SK-N-SH (cell line): ENCODE measurements at regions of chr2 and their contacts with region 1.

Region 1: GRCh38 chr2:143034292-143035074 is 94.7 kb upstream of the ARHGAP15 start:
- DNase-seq: peak; percentile 57
- H3K4me3 ChIP-seq: peak overlapping the region in 1 of 2 experiments; percentile 42; a peak in 1 of 4 replicates
- H3K27ac ChIP-seq: no peak overlapping the region
- H3K4me1 ChIP-seq: no peaks in the 10 kb centered on the region
- H3K27me3 ChIP-seq: no peaks in the 10 kb centered on the region
- CTCF ChIP-seq: peak; percentile 100
- EP300 ChIP-seq: no peak
- RAD21 ChIP-seq: peak; percentile 85

Region 2: DNA sequence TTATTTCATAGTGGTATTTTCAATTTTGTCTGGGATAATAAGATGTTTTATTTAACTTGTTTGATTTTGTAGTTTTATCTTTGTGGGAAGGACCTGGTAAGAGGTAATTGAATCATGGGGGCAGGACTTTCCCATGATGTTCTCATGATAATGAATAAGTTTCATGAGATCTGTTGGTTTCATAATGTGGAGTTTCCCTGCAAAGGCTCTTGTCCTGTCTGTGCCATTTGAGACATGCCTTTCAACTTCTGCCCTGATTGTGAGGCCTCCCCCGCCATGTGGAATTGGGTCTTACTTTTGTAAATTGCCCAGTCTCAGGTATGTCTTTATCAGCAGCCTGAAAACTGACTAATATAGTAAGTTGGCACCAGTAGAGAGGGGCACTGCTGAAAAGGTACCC is 17.0 kb after region 1 on chr2:
- CTCF ChIA-PET with region 1: interaction called, 22 read pairs
- POLR2A ChIA-PET with region 1: no interaction called
- DNase-seq: no peak
- H3K4me3 ChIP-seq: no peak overlapping the region
- H3K27ac ChIP-seq: no peak overlapping the region
- H3K4me1 ChIP-seq: no peaks in the 10 kb centered on the region
- H3K27me3 ChIP-seq: no peaks in the 10 kb centered on the region
- CTCF ChIP-seq: no peak
- EP300 ChIP-seq: no peak
- RAD21 ChIP-seq: no peak

Region 3: GRCh38 chr2:143056548-143056947 is 22.1 kb after region 1 on chr2:
- CTCF ChIA-PET with region 1: interaction called, 10 read pairs
- POLR2A ChIA-PET with region 1: no interaction called
- DNase-seq: no peak
- H3K4me3 ChIP-seq: no peak overlapping the region
- H3K27ac ChIP-seq: no peak overlapping the region
- H3K4me1 ChIP-seq: no peaks in the 10 kb centered on the region
- H3K27me3 ChIP-seq: no peaks in the 10 kb centered on the region
- CTCF ChIP-seq: no peak
- EP300 ChIP-seq: no peak
- RAD21 ChIP-seq: no peak

Region 4: DNA sequence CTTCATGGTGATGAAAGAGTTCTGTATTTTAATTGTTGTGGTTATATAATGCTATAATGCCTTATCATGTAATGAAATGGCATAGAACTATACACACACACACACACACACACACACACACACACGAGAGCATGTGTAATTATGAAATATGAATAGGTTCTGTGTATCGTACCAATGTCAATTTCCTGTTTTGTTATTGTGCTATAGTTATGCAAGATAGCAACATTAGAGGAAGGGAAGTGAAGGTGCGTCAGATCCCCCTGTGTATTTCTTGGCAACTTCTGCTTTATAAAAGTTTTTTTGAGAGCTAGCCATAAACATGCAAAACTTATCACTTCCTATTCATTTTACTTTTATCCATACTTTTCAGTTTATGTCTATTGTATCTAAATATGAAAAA is 34.0 kb after region 1 on chr2:
- CTCF ChIA-PET with region 1: no interaction called
- POLR2A ChIA-PET with region 1: no interaction called
- DNase-seq: no peak
- H3K4me3 ChIP-seq: no peak overlapping the region
- H3K27ac ChIP-seq: no peak overlapping the region
- H3K4me1 ChIP-seq: no peaks in the 10 kb centered on the region
- H3K27me3 ChIP-seq: no peaks in the 10 kb centered on the region
- CTCF ChIP-seq: no peak
- EP300 ChIP-seq: no peak
- RAD21 ChIP-seq: no peak